ENCODE measurements at regions of chr1 and their contacts with region 1.

Region 1: DNA sequence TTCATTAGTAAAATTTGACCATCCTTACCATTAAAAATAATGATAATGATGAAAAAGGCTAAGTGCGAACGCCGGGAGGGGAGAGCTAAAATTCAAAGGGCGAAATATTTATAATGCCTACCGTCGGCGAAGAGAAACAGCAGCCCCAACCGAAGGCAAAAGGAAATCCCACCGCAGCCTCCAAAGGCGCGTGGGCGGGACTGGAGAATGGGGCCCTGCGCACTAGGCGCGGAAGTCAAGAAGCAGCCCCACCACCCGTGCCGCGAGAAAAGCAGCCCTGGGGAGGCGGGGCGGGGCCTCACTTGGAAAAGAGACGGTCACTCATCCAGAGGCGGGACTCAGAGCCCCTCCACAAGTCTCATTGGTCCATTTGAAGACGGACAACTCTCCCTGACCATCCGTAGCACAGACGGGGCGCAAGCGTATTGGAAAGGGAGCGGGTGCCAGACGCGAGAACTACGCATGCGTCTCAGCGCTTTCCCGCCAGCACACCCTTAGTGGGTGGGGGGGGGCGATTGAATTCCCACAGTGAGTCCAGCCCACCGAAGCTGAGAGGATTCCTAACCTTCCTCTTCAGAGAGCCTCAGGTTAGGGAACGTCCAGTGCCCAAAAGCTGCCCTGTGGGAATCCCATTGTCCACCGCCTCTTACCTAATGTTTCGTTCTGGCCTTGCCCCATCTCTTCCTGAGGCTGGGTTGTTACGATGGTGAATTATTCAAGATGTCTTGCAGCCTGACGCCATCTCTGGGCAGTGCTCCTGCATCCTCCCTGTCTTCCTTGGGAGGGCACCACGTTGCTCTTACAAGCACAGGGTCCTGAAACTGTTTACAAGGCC is 19.0 kb downstream of the MTX1 start:
- DNase-seq: peak; percentile 95
- H3K4me3 ChIP-seq: peak overlapping the region; percentile 51
- H3K27me3 ChIP-seq: no peaks in the 10 kb centered on the region
- CTCF ChIP-seq: peak; percentile 21; the same call in 1 of the 2 replicates

Region 2: GRCh38 chr1:154925335-154926170 is 301.9 kb before region 1 on chr1:
- CTCF ChIA-PET with region 1: no interaction called
- POLR2A ChIA-PET with region 1: no interaction called
- DNase-seq: no peak
- H3K4me3 ChIP-seq: no peak overlapping the region
- H3K27me3 ChIP-seq: no peaks in the 10 kb centered on the region
- CTCF ChIP-seq: no peak

Region 3: DNA sequence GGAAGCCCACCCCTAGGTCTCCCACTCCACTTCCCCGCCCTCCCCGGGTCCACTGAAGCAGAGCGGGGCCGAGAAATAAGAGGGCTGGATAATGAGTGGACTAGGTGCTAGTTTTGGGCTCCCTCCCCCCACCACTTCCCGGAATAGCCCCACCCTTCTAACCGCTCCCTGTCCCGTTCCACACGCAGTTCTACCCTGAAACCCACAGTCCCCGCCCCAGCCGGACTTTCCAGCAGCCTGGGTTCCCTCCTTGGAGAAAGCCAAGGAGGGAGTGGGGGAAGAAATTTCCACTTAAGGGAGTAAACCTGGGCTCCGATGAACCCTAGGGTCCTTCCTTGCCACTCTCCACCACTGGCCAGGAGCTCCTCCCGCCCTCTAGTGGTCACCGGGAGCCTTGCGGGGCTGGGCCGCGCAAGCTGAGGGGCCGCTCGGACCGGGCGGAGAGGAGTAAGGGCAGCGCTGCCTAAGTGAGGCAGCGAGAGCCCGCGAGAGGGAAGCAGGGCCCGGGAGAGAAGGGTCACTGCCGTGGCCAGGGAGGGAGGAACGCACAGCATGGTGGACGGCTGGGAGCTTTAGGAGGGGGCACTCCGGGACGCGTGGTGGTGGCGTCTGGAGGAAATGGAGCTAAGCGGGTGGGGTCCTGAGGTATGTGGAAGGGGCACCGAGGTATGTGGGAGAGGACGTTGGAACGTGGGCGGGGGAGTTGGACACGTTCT is 34.0 kb before region 1 on chr1:
- CTCF ChIA-PET with region 1: interaction called, 10 read pairs
- POLR2A ChIA-PET with region 1: no interaction called
- DNase-seq: peak; percentile 76
- H3K4me3 ChIP-seq: peak overlapping the region; percentile 64
- H3K27me3 ChIP-seq: no peaks in the 10 kb centered on the region
- CTCF ChIP-seq: peak; percentile 99